Activated T-helper 2 cell treated with anti-CD3 and anti-CD28 coated beads, Interferon-gamma antibody, Interleukin-2, Interleukin-4, amounts not matched to agents 10 μg/mL and 5 μg/mL and 100 μg/mL, durations not matched to agents 14 hours and 24 hours and 36 hours (primary cell): ENCODE measurements at regions of chr6 and their contacts with region 1.

Region 1: DNA sequence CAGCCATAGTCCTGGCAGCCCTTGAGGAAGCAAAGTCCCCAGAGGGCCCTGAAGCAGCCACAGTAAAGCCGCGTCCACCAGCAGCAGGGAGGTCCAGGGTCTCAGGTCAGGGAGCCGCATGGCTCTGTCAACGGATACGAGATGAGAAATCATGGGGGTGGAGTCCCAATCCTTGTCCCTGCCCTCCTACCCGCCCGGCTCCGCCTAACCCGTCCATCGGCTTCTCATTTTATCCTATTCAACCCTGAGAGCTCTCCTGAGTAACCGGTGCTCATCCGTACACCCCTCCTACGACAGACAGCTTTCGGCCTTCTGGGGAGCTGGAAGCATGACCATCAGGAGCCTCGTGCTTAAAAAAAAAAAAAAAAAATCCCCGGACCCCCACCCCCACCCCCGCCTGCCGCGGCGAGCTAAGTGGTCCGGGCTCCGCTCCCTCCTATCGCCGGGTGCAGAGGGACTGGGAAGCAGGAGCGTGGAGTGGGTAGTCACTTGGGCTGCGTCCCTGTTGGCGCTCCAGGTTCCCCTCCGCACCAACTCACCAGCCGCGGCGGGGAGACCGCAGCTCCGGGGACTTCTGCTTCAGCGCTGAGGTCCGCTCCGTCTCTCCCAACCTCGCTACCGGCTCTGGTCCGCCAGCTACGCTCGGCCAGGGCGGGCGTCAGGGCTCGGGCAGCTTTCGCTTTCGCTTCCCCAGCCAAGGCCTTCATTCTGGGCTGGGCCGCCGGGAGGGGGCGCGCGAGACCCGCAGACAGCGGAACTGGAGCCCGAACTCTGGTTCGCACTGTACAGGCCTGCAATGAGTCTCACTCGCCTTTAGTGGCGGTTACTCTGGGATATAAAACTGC is at the start of gene TAP2:
- DNase-seq: peak; percentile 96
- H3K4me3 Mint-ChIP-seq: peak within 1 kb of the TSS; percentile 88
- H3K27ac Mint-ChIP-seq: peak within 1 kb of the TSS; percentile 83
- H3K4me1 Mint-ChIP-seq: peaks cover 72% of the 10 kb centered on the region
- H3K27me3 Mint-ChIP-seq: no peaks in the 10 kb centered on the region
- total RNA-seq, gene TAP2: 142 and 162 TPM in 2 replicates

Region 2: DNA sequence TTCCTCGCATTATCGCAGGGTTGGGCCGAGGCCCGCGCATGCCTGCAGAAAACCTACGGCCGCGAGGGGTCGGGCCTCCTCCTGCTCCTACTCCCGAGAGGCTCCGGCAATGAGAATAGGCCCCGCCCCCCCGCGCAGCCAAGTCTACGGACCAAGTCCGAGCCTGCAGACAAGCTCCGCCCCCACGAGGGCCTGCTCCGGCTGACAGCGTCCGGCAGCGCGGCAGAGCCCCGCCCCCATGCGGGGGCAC is 642.8 kb before region 1 on chr6:
- intact Hi-C with region 1: loop called (anchors 10 kb)
- DNase-seq: peak; percentile 100
- H3K4me3 Mint-ChIP-seq: peak overlapping the region; percentile 98
- H3K27ac Mint-ChIP-seq: peak overlapping the region; percentile 99
- H3K4me1 Mint-ChIP-seq: peaks cover 33% of the 10 kb centered on the region
- H3K27me3 Mint-ChIP-seq: no peaks in the 10 kb centered on the region

Region 3: DNA sequence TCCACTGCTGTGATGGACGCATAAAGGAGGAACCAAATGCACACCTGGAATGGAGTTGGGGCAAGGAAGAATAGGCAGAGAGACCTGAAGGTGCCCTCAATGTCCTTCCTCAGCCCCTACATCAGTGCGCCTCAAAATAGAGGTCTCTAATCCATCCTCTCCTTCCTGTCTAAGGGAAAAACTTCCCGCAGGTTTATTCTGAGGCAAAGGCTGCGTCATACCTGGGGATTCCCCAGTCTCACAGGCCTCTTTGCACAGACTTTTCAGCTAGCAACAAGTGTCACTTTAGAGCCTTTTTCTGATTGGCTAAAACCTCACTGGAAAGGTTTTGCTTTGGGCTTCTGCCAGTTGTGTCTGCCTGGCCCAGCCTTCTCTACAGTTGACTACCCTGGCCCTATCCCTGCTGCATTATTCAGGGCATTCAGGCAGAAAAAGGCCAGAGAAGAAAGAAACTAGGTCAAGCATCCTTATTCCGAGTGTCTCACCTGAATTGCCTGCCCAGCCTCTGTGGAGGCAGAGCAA is 170.0 kb before region 1 on chr6:
- intact Hi-C with region 1: no loop called
- DNase-seq: peak; percentile 39
- H3K4me3 Mint-ChIP-seq: no peak overlapping the region
- H3K27ac Mint-ChIP-seq: no peak overlapping the region
- H3K4me1 Mint-ChIP-seq: peaks cover 46% of the 10 kb centered on the region
- H3K27me3 Mint-ChIP-seq: peaks cover 27% of the 10 kb centered on the region

Region 4: GRCh38 chr6:32853541-32854375 is 15.4 kb after region 1 on chr6 and contains the starts of genes PSMB9 and TAP1:
- intact Hi-C with region 1: loop called (anchors 1 kb)
- DNase-seq: peak; percentile 93
- H3K4me3 Mint-ChIP-seq: peak within 1 kb of the TSS; percentile 99
- H3K27ac Mint-ChIP-seq: peak within 1 kb of the TSS; percentile 97
- H3K4me1 Mint-ChIP-seq: peaks cover 63% of the 10 kb centered on the region
- H3K27me3 Mint-ChIP-seq: no peaks in the 10 kb centered on the region
- total RNA-seq, gene PSMB9: 262 and 265 TPM in 2 replicates
- total RNA-seq, gene TAP1: 276 and 278 TPM in 2 replicates

Region 5: GRCh38 chr6:32868257-32868788 is 30.0 kb after region 1 on chr6:
- intact Hi-C with region 1: loop called (anchors 1 kb)
- DNase-seq: peak; percentile 76
- H3K4me3 Mint-ChIP-seq: no peak overlapping the region
- H3K27ac Mint-ChIP-seq: no peak overlapping the region
- H3K4me1 Mint-ChIP-seq: peaks cover 40% of the 10 kb centered on the region
- H3K27me3 Mint-ChIP-seq: no peaks in the 10 kb centered on the region

Region 6: GRCh38 chr6:32940656-32941213 is 102.4 kb after region 1 on chr6 and contains the start of gene HLA-DMB:
- intact Hi-C with region 1: loop called (anchors 2 kb)
- DNase-seq: peak; percentile 48
- H3K4me3 Mint-ChIP-seq: peak within 1 kb of the TSS; percentile 77
- H3K27ac Mint-ChIP-seq: peak within 1 kb of the TSS; percentile 91
- H3K4me1 Mint-ChIP-seq: peaks cover 55% of the 10 kb centered on the region
- H3K27me3 Mint-ChIP-seq: no peaks in the 10 kb centered on the region
- total RNA-seq, gene HLA-DMB: 1.3 and 1.4 TPM in 2 replicates